ENCODE measurements at regions of chr19 and their contacts with region 1.

Region 1: DNA sequence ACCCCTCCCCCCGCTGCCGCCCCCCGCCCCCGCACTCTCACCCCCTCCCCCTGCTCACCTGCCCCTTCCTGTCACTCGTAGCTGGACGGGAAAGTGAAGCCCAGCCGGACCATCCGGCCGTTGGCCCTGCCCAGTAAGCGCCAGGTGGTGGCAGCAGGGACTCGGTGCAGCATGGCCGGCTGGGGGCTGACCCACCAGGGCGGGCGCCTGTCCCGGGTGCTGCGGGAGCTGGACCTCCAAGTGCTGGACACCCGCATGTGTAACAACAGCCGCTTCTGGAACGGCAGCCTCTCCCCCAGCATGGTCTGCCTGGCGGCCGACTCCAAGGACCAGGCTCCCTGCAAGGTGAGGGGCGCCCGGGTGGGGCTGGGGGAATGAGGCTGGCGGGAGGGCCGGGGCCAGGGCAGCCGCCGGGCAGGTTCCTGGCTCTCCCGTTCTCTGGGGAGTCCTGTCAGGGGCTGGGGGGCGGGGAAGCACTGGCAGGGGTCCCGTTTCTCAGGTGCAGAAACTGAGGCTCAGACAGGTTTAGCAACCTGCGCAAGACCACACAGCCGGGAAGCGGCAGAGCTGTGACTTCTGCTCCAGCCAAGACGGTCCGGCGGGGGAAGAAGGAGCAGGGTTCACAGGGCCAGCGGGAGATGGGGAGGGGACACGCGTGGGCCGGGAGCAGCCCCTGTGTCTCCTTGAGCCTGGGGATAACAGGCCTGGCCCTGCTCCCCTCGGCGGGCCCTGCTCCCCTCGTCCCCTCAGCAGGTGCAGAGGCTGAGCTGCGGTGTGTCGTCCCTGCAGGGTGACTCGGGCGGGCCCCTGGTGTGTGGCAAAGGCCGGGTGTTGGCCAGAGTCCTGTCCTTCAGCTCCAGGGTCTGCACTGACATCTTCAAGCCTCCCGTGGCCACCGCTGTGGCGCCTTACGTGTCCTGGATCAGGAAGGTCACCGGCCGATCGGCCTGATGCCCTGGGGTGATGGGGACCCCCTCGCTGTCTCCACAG is 5.3 kb downstream of the GZMM start:
- DNase-seq: peak; percentile 75
- H3K4me3 ChIP-seq: no peak overlapping the region
- H3K27ac ChIP-seq: no peak overlapping the region
- H3K4me1 ChIP-seq: peaks cover 0 to 4% of the 10 kb centered on the region in 2 experiments; a peak in 1 of 4 replicates
- H3K27me3 ChIP-seq: no peaks in the 10 kb centered on the region
- CTCF ChIP-seq: no peak
- EP300 ChIP-seq: no peak
- RAD21 ChIP-seq: peak; percentile 28

Region 2: GRCh38 chr19:531009-531752 is 18.0 kb before region 1 on chr19:
- CTCF ChIA-PET with region 1: interaction called, 23 read pairs
- POLR2A ChIA-PET with region 1: no interaction called
- DNase-seq: peak; percentile 99
- H3K4me3 ChIP-seq: peak overlapping the region; percentile 73 to 75
- H3K27ac ChIP-seq: peak overlapping the region; percentile 80 to 95
- H3K4me1 ChIP-seq: peaks cover 11 to 19% of the 10 kb centered on the region in 2 experiments; a peak in 2 of 4 replicates
- H3K27me3 ChIP-seq: no peaks in the 10 kb centered on the region
- CTCF ChIP-seq: no peak
- EP300 ChIP-seq: no peak
- RAD21 ChIP-seq: no peak

Region 3: GRCh38 chr19:802498-803098 is 253.5 kb after region 1 on chr19:
- CTCF ChIA-PET with region 1: no interaction called
- POLR2A ChIA-PET with region 1: no interaction called
- DNase-seq: no peak
- H3K4me3 ChIP-seq: no peak overlapping the region
- H3K27ac ChIP-seq: no peak overlapping the region; a peak in 1 of 4 replicates
- H3K4me1 ChIP-seq: peaks cover 29 to 41% of the 10 kb centered on the region in 2 experiments; a peak in 3 of 4 replicates
- H3K27me3 ChIP-seq: no peaks in the 10 kb centered on the region
- CTCF ChIP-seq: no peak
- EP300 ChIP-seq: no peak
- RAD21 ChIP-seq: no peak

Measured in SK-N-SH (cell line).